ENCODE measurements at regions of chr1 and their contacts with region 1.

Region 1: DNA sequence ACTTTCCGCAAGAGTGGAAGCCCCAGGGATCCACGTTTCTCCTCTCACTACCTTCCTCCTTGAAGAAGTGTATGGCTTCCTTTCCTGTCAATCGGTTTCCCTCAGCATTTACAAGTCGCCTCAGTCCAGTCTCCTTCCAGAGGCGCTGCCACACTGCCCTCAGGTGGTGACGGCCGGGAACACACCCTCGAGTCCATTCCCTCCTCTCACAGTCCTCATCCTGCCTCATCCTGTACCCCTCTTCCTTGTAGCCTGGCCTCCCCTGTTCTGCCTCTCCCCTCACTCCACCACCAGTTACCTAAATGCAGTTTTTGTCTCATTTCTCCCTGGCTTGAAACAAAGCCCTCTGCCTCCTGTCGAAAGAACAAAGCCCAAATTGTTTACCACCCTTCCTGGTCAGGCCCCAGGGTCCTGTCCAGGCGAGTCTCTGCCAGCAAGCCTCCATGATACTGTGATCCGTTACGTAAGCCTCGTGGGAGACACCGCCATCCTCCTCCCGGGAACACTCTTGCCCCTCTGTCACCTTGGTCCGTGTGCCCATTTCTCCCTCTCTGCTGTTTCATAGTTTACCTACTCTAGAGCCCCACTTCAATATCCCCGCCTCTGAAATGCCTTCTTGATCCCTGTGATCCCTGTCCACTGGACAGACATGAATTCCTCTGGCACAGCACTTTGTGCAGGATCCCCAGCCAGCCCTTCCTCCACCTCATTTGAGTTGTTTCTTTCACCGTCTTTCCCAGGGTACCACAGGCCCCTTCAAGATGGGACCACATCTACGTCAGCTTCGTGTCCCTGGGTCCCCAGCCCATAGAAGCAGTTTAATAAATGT is 23.3 kb upstream of the LSM10 start:
- DNase-seq: no peak
- H3K4me3 ChIP-seq: no peak overlapping the region
- H3K27ac ChIP-seq: peak overlapping the region in 2 of 4 donors; percentile 12 to 26
- H3K4me1 ChIP-seq: peaks cover 0 to 13% (median 0%) of the 10 kb centered on the region in 3 donors
- H3K27me3 ChIP-seq: no peaks in the 10 kb centered on the region
- CTCF ChIP-seq: peak; percentile 88 to 95 (median 92)
- POLR2A ChIP-seq: no peak

Region 2: GRCh38 chr1:36342481-36343478 is 78.3 kb before region 1 on chr1:
- intact Hi-C with region 1: loop called (anchors 5 kb)
- DNase-seq: no peak
- H3K4me3 ChIP-seq: no peak overlapping the region
- H3K27ac ChIP-seq: peak overlapping the region; percentile 5 to 75 (median 48)
- H3K4me1 ChIP-seq: peaks cover 3 to 21% (median 18%) of the 10 kb centered on the region in 3 donors
- H3K27me3 ChIP-seq: no peaks in the 10 kb centered on the region
- CTCF ChIP-seq: peak; percentile 54 to 70 (median 58)
- POLR2A ChIP-seq: no peak

Region 3: DNA sequence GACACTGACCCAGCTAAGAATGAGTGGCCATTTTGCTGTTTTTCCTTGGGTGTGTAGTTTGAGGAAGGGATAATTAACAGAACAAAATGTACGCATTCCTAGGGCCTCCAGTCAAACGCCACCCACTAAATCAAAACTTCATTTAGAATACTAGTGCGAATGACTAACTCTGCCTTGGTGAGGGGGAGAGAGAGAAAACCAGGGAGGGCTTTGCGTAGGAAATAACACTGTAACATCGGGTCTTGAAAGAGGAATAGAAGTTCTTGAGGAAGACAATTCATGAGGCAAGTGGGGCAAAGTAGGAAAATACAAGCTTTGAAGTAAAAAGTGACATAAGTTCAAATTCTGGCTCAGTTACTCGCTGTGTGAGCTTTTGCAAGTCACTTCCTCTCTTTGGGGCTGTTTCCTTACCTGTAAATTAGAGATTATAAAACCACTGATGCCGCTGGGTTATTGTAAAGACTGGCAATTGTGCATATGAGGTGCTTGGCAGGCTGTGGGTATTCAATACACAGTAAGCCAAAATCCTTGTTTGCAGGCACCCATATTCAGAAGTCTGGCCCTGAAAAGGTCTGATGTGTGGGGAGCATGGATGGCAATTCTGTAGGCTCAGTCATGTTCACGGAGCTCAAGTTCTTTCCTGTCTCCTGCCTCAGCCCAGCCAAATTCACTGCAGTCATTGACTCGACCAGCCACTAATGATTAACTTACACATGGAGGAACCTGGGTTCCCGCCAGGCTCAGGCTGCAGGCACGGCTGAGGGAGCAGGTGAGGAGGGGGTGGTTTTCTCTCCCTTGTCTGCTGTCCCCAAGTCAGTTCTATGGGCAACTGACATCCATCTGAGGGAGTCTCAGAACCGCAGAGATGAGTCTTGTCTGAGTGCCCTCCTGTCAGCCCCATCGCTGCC is 201.9 kb after region 1 on chr1:
- intact Hi-C with region 1: no loop called
- DNase-seq: no peak
- H3K4me3 ChIP-seq: no peak overlapping the region
- H3K27ac ChIP-seq: no peak overlapping the region
- H3K4me1 ChIP-seq: no peaks in the 10 kb centered on the region
- H3K27me3 ChIP-seq: peaks cover 0 to 49% (median 0%) of the 10 kb centered on the region in 4 donors
- CTCF ChIP-seq: no peak
- POLR2A ChIP-seq: no peak

Measured in esophagus squamous epithelium (tissue), 5 donors.